PC-9 (cell line): ENCODE measurements at regions of chr12 and their contacts with region 1.

Region 1: DNA sequence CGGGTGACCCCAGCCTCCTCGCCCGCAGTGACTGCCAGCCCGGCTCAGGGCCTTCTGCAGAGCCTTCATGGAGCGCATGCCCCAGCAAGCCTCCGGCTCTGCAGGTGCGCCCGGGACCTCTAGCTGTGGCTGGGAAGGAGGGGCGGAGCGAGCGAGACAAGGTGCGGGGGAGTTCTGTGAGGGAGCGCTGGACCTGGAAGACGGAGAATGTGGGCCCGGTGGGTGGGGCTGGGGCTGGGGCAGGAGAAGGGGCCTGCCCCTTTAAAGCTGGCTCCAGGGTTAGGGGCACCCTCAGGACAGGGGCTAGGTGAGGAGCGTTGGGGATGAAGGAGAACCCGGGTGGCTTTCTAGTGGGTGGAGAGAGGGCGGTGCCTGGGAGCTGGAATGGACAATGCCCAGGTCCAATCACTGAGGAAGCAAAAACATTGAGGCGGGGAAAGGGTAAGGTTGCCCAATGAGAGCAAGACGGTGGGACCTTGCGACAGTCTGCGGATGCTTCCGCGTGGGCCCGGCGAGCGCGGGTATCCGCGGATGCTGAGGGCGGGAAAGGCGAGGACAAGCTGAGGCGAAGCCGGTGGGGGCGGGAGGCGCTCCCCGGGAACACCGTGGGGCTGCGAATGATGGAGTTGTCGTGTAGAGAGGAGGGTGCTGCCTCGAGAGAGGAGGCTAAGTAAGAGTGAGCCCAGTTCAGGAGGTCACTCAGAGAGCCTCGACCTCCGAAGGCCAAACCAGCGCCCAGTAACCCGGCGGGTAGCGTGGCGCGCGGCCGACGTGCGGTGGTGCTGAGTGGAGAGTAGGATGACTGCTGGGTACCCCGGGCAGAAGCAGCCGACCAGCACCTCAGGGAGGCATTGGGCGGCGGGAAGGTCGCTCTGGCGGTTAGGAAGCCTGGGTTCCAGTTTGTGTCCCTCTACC is at the start of gene GLS2:
- DNase-seq: peak; percentile 59 to 77
- H3K4me3 ChIP-seq: peak within 1 kb of the TSS; percentile 57; the same call in 1 of the 2 replicates
- H3K27ac ChIP-seq: no peak within 1 kb of the TSS
- H3K4me1 ChIP-seq: no peaks in the 10 kb centered on the region
- H3K27me3 ChIP-seq: peaks cover 24% of the 10 kb centered on the region; the same call in 1 of the 2 replicates
- CTCF ChIP-seq: no peak
- total RNA-seq, gene GLS2: 1.3 and 2.9 TPM in 2 replicates

Region 2: DNA sequence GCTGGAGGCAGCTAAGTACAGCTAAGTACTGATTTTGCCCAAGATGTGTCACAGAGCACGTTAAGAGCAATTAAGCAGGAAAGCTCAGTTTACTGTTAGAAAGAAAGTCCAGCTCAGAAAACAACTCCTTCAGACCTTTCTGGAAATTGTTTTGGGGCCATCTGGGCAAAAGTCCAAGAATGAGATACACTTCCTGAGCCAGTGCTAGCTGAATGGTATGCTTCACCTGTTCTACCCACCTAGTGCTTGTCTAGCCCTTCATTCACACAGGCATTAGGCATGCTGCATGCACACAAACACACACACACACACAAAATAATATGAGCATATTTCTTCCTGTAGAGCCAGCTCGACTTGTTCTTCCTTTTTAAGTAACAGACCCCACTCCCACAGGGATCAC is 474.1 kb before region 1 on chr12:
- CTCF ChIA-PET with region 1: no interaction called
- POLR2A ChIA-PET with region 1: interaction called, 13 read pairs
- intact Hi-C with region 1: no loop called
- DNase-seq: peak in 1 of 2 experiments; percentile 15
- H3K4me3 ChIP-seq: no peak overlapping the region
- H3K27ac ChIP-seq: no peak overlapping the region
- H3K4me1 ChIP-seq: peaks cover 10% of the 10 kb centered on the region
- H3K27me3 ChIP-seq: no peaks in the 10 kb centered on the region
- CTCF ChIP-seq: no peak

Region 3: GRCh38 chr12:56339158-56339422 is 149.2 kb before region 1 on chr12:
- CTCF ChIA-PET with region 1: no interaction called
- POLR2A ChIA-PET with region 1: interaction called, 10 read pairs
- intact Hi-C with region 1: no loop called
- DNase-seq: no peak
- H3K4me3 ChIP-seq: no peak overlapping the region
- H3K27ac ChIP-seq: peak overlapping the region; percentile 64
- H3K4me1 ChIP-seq: peaks cover 29% of the 10 kb centered on the region
- H3K27me3 ChIP-seq: no peaks in the 10 kb centered on the region
- CTCF ChIP-seq: no peak

Region 4: DNA sequence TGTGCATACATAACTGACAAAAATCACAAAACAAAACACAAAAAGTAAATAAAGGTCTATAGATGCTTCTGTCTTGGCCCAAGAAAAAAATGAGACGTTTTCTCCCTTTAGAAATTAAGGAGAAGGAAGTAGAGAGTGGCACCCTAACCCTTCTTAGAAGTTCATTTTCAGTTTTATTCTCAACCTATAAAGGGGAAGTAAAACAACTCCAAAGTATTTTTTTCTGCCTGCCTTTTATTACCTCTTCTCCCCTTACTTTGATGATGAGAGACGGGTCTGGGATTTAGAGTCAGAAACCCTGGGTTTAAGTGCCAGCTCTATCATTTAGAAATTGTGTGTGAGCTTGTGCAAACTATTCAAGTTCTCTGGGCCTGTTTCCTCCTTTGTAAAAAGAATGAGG is 261.1 kb after region 1 on chr12:
- CTCF ChIA-PET with region 1: no interaction called
- POLR2A ChIA-PET with region 1: no interaction called
- intact Hi-C with region 1: no loop called
- DNase-seq: no peak
- H3K4me3 ChIP-seq: no peak overlapping the region
- H3K27ac ChIP-seq: no peak overlapping the region
- H3K4me1 ChIP-seq: peaks cover 8% of the 10 kb centered on the region; the same call in 1 of the 2 replicates
- H3K27me3 ChIP-seq: no peaks in the 10 kb centered on the region
- CTCF ChIP-seq: no peak

Region 5: DNA sequence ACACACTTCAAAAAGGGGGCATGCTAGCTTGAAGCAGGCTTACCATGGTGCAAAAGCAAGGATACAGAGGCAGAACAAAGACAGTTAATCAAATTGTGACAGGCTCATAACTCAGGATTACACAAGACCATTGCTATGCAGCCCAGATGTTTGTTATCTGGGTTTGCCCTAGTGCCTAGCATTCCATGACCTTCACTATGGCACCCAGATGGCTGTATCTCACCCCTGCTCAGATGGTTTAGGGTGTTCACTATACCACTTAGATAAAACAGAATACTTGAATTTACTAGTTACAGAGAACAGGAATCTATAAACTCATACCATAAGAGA is 389.7 kb after region 1 on chr12:
- CTCF ChIA-PET with region 1: no interaction called
- POLR2A ChIA-PET with region 1: no interaction called
- intact Hi-C with region 1: no loop called
- DNase-seq: no peak
- H3K4me3 ChIP-seq: no peak overlapping the region
- H3K27ac ChIP-seq: no peak overlapping the region
- H3K4me1 ChIP-seq: no peaks in the 10 kb centered on the region
- H3K27me3 ChIP-seq: peaks cover 40% of the 10 kb centered on the region
- CTCF ChIP-seq: no peak